ENCODE measurements at regions of chrX and their contacts with region 1.

Region 1: DNA sequence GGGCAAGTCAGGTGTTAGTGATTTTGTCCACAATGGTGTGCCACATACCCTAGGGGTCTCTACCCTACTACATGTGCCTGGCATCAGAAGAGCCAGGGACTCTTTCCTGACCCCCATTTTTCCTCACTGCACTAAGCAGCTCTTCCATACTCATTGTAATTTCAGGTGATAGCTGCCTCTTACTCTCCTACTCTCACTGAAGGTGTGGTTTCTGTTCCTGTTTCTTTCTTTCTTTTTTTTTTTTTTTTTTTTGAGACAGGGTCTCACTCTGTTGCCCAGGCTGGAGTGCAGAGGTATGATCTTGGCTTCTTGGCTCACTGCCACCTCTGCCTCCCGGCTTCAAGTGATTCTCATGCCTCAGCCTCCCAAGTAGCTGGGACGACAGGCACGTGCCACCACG is 164.9 kb upstream of the USP9X start:
- DNase-seq: no peak
- ATAC-seq: no peak
- H3K4me3 ChIP-seq: no peak overlapping the region
- H3K4me3 Mint-ChIP-seq: no peak overlapping the region
- H3K27ac ChIP-seq: no peak overlapping the region
- H3K27ac Mint-ChIP-seq: no peak overlapping the region
- H3K4me1 ChIP-seq: no peaks in the 10 kb centered on the region
- H3K4me1 Mint-ChIP-seq: no peaks in the 10 kb centered on the region
- H3K27me3 ChIP-seq: no peaks in the 10 kb centered on the region
- H3K27me3 Mint-ChIP-seq: no peaks in the 10 kb centered on the region
- CTCF ChIP-seq: no peak

Region 2: DNA sequence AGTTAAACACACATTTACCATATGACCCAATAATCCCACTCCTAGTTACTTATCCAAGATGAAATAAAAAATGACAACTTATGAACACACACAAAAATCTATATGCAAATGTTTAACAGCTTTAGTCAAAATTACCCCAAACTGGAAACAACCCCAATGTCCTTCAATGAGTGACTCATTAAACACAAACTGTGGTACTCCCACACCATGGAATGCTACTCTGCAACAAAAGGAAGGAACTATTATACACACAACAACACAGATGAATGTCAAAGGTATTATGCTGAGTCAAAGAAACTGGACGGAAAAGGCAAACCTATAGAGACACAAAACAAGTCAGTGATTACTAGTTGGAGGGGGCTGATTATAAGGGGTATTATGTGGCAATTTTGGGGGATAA is 225.5 kb before region 1 on chrX:
- CTCF ChIA-PET with region 1: no interaction called
- POLR2A ChIA-PET with region 1: no interaction called
- intact Hi-C with region 1: no loop called
- DNase-seq: no peak
- ATAC-seq: no peak
- H3K4me3 ChIP-seq: no peak overlapping the region
- H3K4me3 Mint-ChIP-seq: no peak overlapping the region
- H3K27ac ChIP-seq: no peak overlapping the region
- H3K27ac Mint-ChIP-seq: no peak overlapping the region
- H3K4me1 ChIP-seq: no peaks in the 10 kb centered on the region
- H3K4me1 Mint-ChIP-seq: no peaks in the 10 kb centered on the region
- H3K27me3 ChIP-seq: no peaks in the 10 kb centered on the region
- H3K27me3 Mint-ChIP-seq: no peaks in the 10 kb centered on the region
- CTCF ChIP-seq: no peak

Region 3: GRCh38 chrX:40933132-40933705 is 12.9 kb after region 1 on chrX:
- CTCF ChIA-PET with region 1: no interaction called
- POLR2A ChIA-PET with region 1: no interaction called
- intact Hi-C with region 1: loop called in 1 of 2 experiments (anchors 2 kb)
- DNase-seq: peak in 2 of 9 experiments; percentile 23 to 51
- ATAC-seq: peak; percentile 42
- H3K4me3 ChIP-seq: peak overlapping the region; percentile 24 to 31
- H3K4me3 Mint-ChIP-seq: peak overlapping the region; percentile 83
- H3K27ac ChIP-seq: peak overlapping the region; percentile 19 to 56
- H3K27ac Mint-ChIP-seq: peak overlapping the region; percentile 92
- H3K4me1 ChIP-seq: peaks cover 12% of the 10 kb centered on the region
- H3K4me1 Mint-ChIP-seq: peaks cover 18% of the 10 kb centered on the region
- H3K27me3 ChIP-seq: no peaks in the 10 kb centered on the region
- H3K27me3 Mint-ChIP-seq: no peaks in the 10 kb centered on the region
- CTCF ChIP-seq: no peak